ENCODE measurements at regions of chr7 and their contacts with region 1.

Region 1: DNA sequence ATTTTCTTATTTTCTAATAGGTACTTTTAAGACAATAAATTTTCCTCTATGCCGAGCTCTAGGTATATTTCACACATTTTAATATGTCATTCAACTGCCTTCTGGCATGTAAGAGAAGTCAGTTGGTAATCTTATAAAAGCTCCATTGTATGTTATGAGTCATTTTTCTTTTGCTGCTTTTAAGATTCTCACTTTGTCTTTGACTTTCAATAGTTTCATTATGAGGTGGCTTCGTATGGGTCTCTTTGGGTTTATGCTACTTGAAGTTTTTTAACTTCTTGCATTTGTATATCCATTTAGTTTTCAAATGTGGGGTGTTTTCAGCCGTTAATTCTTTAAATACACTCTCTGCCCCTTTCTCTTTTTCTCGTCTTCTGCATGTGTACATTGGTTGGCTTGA is 80.5 kb downstream of the ABCA13 start:
- DNase-seq: peak; percentile 74
- ATAC-seq: peak; percentile 44
- H3K4me3 ChIP-seq: no peak overlapping the region
- H3K27ac ChIP-seq: peak overlapping the region; percentile 95
- H3K4me1 ChIP-seq: peaks cover 34% of the 10 kb centered on the region
- H3K27me3 ChIP-seq: no peaks in the 10 kb centered on the region
- CTCF ChIP-seq: no peak

Region 2: GRCh38 chr7:47833211-47833610 is 418.6 kb before region 1 on chr7:
- CTCF ChIA-PET with region 1: no interaction called
- POLR2A ChIA-PET with region 1: no interaction called
- intact Hi-C with region 1: no loop called
- DNase-seq: no peak
- ATAC-seq: no peak
- H3K4me3 ChIP-seq: no peak overlapping the region
- H3K27ac ChIP-seq: no peak overlapping the region
- H3K4me1 ChIP-seq: no peaks in the 10 kb centered on the region
- H3K27me3 ChIP-seq: no peaks in the 10 kb centered on the region
- CTCF ChIP-seq: no peak

Region 3: DNA sequence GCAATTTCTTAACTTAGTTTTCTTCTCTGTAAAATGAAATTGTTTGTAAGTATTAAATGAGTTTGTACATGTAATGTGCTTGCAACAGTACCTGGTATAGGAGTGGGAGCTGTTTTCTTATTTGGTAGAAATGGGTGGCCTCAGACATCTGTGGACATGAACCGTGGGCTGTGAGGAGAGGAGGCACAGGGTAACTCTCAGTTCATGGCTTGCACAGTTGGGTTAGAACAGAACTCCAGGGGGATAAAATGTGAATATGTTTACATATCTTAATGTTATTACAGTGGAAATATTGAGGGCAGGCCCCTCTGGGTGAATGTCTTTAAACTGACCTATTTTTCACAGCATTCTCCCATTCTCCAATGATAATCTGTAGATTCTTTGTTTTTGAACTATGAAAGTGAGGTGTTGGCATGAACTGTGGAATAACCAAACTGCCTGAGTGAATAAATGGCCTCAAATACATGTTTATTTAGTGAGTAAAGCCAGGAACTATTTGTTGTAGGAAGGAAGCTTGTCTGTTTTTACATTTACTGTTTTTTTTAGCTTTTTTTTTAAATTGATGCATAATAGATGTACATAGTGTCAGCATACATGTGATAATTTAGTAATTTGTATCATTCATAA is 77.9 kb before region 1 on chr7:
- CTCF ChIA-PET with region 1: no interaction called
- POLR2A ChIA-PET with region 1: interaction called, 3 read pairs
- intact Hi-C with region 1: loop called (anchors 1 kb)
- DNase-seq: peak; percentile 69
- ATAC-seq: peak; percentile 82
- H3K4me3 ChIP-seq: peak overlapping the region; percentile 11; the same call in 1 of the 2 replicates
- H3K27ac ChIP-seq: peak overlapping the region; percentile 82
- H3K4me1 ChIP-seq: peaks cover 22% of the 10 kb centered on the region
- H3K27me3 ChIP-seq: no peaks in the 10 kb centered on the region
- CTCF ChIP-seq: no peak

Region 4: DNA sequence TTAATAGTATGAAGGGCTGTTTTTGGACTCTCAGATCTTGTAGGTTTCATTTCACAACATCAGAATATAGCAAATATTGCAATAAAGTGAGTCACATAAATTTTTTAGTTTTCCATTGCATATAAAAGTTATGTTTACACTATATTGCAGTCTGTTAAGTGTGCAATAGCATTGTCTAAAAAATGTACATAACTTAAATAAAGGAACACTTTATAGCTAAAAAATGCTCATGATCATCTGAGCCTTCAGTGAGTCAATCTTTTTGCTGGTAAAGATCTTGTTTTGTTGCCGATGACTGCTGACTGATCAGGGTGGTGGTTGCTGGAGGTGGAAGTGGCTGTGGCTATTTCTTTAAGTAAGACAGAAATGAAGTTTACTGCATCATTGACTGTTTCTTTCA is 38.5 kb before region 1 on chr7:
- CTCF ChIA-PET with region 1: no interaction called
- POLR2A ChIA-PET with region 1: no interaction called
- intact Hi-C with region 1: loop called (anchors 1 kb)
- DNase-seq: peak; percentile 82
- ATAC-seq: peak; percentile 95
- H3K4me3 ChIP-seq: no peak overlapping the region
- H3K27ac ChIP-seq: peak overlapping the region; percentile 69
- H3K4me1 ChIP-seq: peaks cover 26% of the 10 kb centered on the region
- H3K27me3 ChIP-seq: no peaks in the 10 kb centered on the region
- CTCF ChIP-seq: no peak

Region 5: DNA sequence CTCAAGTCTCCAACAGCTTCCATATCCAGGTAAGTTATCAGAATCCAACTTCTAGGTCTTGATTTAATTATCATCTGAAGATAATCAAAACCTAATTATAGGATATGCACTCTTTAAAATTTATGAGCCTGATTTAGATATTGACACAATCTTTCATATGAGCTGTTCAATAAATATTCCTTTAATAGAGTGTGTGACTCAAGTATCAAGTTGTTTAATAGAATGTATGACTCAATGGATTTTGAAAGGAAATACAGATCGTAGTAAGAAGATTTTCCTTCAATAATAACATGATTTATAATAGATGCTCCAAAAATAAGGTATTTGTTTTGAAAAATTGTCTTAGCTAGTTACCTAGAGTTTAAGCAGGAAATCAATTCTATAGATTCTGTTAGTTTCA is 17.3 kb after region 1 on chr7:
- CTCF ChIA-PET with region 1: no interaction called
- POLR2A ChIA-PET with region 1: interaction called, 4 read pairs
- intact Hi-C with region 1: loop called (anchors 1 kb)
- DNase-seq: peak; percentile 45
- ATAC-seq: peak; percentile 74
- H3K4me3 ChIP-seq: no peak overlapping the region
- H3K27ac ChIP-seq: peak overlapping the region; percentile 53
- H3K4me1 ChIP-seq: peaks cover 19% of the 10 kb centered on the region
- H3K27me3 ChIP-seq: no peaks in the 10 kb centered on the region
- CTCF ChIP-seq: no peak

Region 6: DNA sequence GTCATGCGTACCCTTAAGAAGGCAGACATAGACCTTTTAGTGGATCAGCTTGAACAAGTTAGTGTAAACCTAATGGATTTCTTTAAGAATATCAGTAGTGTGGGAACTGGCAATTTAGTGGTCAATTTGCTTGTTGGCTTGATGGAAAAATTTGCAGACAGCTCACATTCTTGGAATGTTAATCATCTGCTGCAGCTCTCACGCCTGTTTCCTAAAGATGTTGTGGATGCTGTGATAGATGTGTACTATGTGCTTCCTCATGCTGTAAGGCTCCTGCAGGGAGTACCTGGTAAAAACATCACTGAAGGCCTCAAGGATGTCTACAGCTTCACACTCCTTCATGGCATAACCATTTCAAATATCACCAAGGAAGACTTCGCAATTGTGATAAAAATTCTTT is 22.9 kb after region 1 on chr7:
- CTCF ChIA-PET with region 1: no interaction called
- POLR2A ChIA-PET with region 1: no interaction called
- intact Hi-C with region 1: loop called (anchors 1 kb)
- DNase-seq: peak; percentile 22
- ATAC-seq: peak; percentile 63
- H3K4me3 ChIP-seq: no peak overlapping the region
- H3K27ac ChIP-seq: no peak overlapping the region
- H3K4me1 ChIP-seq: peaks cover 24% of the 10 kb centered on the region
- H3K27me3 ChIP-seq: no peaks in the 10 kb centered on the region
- CTCF ChIP-seq: no peak

Region 7: DNA sequence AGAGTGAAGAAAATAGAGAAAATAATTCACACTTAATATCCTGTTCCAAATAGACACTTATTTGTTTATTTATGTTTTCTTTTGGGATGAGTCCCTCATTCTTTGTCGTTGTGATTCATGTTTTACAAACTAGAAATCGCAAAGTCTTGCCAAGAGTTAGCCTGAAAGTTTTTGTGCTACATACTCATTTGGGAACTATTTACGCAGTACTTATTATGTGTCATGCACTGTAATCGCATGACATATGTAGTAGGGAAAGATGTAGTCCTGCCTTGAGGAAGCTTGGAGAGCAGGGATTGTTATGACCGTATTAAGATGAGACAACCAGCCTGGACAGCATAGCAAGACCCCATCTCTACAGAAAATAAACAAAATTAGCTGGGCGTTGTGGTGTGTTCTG is 108.8 kb after region 1 on chr7:
- CTCF ChIA-PET with region 1: no interaction called
- POLR2A ChIA-PET with region 1: no interaction called
- intact Hi-C with region 1: loop called (anchors 5 kb)
- DNase-seq: peak; percentile 82
- ATAC-seq: peak; percentile 62
- H3K4me3 ChIP-seq: no peak overlapping the region
- H3K27ac ChIP-seq: peak overlapping the region; percentile 43
- H3K4me1 ChIP-seq: peaks cover 30% of the 10 kb centered on the region
- H3K27me3 ChIP-seq: no peaks in the 10 kb centered on the region
- CTCF ChIP-seq: no peak

Measured in PC-3 (cell line).